Breast epithelium (tissue), 4 donors: ENCODE measurements at regions of chr4 and their contacts with region 1.

Region 1: GRCh38 chr4:156695163-156695562 is 276.4 kb downstream of the PDGFC start:
- DNase-seq: no peak
- H3K4me3 ChIP-seq: no peak overlapping the region
- H3K27ac ChIP-seq: no peak overlapping the region
- H3K4me1 ChIP-seq: no peaks in the 10 kb centered on the region
- H3K27me3 ChIP-seq: no peaks in the 10 kb centered on the region
- CTCF ChIP-seq: no peak
- POLR2A ChIP-seq: no peak

Region 2: GRCh38 chr4:156636381-156636780 is 58.8 kb before region 1 on chr4:
- intact Hi-C with region 1: loop called (anchors 2 kb)
- DNase-seq: no peak
- H3K4me3 ChIP-seq: no peak overlapping the region
- H3K27ac ChIP-seq: no peak overlapping the region
- H3K4me1 ChIP-seq: no peaks in the 10 kb centered on the region
- H3K27me3 ChIP-seq: no peaks in the 10 kb centered on the region
- CTCF ChIP-seq: no peak
- POLR2A ChIP-seq: no peak

Region 3: DNA sequence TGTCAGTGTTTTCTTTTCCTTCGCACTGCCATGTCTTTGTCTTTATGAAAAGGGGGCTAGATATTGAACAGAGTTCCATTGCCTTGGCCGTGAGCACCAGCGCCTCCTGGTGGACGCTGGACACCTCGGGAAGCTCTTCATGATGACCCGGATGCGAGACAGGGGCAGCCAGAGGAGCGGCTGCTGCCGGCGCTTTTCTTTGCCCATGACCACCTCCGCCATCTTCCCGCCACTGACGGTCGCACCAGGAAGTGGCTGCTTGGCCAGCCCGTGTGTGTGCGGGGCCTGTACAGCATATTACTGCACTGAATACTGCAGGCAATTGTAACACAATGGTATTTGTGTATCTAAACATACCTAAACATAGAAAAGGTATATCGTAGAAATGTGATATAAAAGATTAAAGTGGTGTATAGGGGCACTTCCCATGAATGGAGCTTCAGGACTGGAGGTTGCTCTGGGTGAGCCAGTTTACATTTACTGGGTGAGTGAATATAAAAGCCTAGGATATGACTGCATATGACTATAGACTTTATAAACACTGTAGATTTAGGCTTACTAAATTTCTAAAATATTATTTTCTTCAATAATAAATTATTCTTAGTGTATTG is 509.6 kb after region 1 on chr4:
- intact Hi-C with region 1: no loop called
- DNase-seq: no peak
- H3K4me3 ChIP-seq: no peak overlapping the region
- H3K27ac ChIP-seq: no peak overlapping the region
- H3K4me1 ChIP-seq: no peaks in the 10 kb centered on the region
- H3K27me3 ChIP-seq: no peaks in the 10 kb centered on the region
- CTCF ChIP-seq: no peak
- POLR2A ChIP-seq: no peak